Activated CD8-positive, alpha-beta T cell treated with anti-CD3 and anti-CD28 coated beads for 36 hours (primary cell): ENCODE measurements at regions of chr12 and their contacts with region 1.

Region 1: GRCh38 chr12:111396726-111397445 is 8.8 kb upstream of the SH2B3 start:
- DNase-seq: peak; percentile 89
- ATAC-seq: peak; percentile 75
- H3K4me3 Mint-ChIP-seq: peak overlapping the region; percentile 70
- H3K27ac Mint-ChIP-seq: peak overlapping the region; percentile 87
- H3K4me1 Mint-ChIP-seq: peaks cover 36% of the 10 kb centered on the region
- H3K27me3 Mint-ChIP-seq: no peaks in the 10 kb centered on the region
- CTCF ChIP-seq: peak; percentile 99

Region 2: DNA sequence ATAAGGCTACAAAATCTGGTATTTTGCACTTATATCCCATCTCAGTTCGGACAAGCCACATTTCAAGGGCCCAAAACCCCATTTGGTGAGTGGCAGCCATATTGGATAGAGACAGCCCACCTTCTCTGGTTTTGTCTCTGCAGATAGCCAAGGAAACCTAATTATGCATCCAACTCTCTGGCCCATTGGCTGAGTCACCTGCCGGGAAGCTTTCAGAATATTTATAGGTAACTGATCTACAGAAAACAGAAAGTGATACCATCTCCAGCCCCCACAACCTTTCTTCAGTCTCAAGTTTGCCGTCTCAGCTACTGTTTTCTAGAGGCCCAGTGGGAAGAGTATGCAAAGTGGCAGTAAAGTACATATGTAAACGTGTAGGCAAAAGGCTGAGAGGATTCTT is 620.5 kb before region 1 on chr12:
- CTCF ChIA-PET with region 1: no interaction called
- POLR2A ChIA-PET with region 1: no interaction called
- intact Hi-C with region 1: no loop called
- DNase-seq: peak; percentile 86
- ATAC-seq: peak; percentile 88
- H3K4me3 Mint-ChIP-seq: peak overlapping the region; percentile 35
- H3K27ac Mint-ChIP-seq: peak overlapping the region; percentile 96
- H3K4me1 Mint-ChIP-seq: peaks cover 61% of the 10 kb centered on the region
- H3K27me3 Mint-ChIP-seq: no peaks in the 10 kb centered on the region
- CTCF ChIP-seq: no peak

Region 3: GRCh38 chr12:111386885-111387284 is 10.0 kb before region 1 on chr12:
- CTCF ChIA-PET with region 1: interaction called, 14 read pairs
- POLR2A ChIA-PET with region 1: no interaction called
- intact Hi-C with region 1: no loop called
- DNase-seq: no peak
- ATAC-seq: no peak
- H3K4me3 Mint-ChIP-seq: no peak overlapping the region
- H3K27ac Mint-ChIP-seq: no peak overlapping the region
- H3K4me1 Mint-ChIP-seq: no peaks in the 10 kb centered on the region
- H3K27me3 Mint-ChIP-seq: no peaks in the 10 kb centered on the region
- CTCF ChIP-seq: no peak

Region 4: DNA sequence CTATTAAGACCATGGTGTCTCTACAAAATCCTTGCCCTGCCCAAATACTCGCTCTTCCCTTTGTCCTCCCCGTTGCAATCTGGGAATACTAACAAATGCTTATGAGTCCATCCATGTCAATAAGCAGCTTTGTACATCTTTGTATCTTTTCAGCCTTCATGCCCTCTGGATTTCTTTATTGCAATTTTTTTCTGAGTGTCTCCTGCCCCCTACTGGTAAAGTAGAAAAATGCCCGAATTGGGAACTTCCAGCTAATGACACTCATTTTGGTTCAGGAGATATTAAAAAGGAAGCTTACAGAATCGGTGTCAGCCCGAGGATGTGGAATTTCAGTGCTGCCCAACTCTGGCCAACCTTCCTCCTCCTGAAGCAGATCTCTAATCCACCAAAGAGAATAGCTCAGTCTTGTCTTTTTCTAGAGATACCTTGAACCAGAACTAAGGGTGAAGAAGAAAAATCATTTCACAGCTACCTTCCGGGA is 54.8 kb after region 1 on chr12:
- CTCF ChIA-PET with region 1: interaction called, 1,222 read pairs
- POLR2A ChIA-PET with region 1: interaction called, 28 read pairs
- intact Hi-C with region 1: loop called (anchors 1 kb)
- DNase-seq: no peak
- ATAC-seq: peak; percentile 53
- H3K4me3 Mint-ChIP-seq: no peak overlapping the region
- H3K27ac Mint-ChIP-seq: peak overlapping the region; percentile 21
- H3K4me1 Mint-ChIP-seq: peaks cover 40% of the 10 kb centered on the region
- H3K27me3 Mint-ChIP-seq: no peaks in the 10 kb centered on the region
- CTCF ChIP-seq: peak; percentile 92

Region 5: GRCh38 chr12:111482462-111482861 is 85.6 kb after region 1 on chr12:
- CTCF ChIA-PET with region 1: interaction called, 47 read pairs
- POLR2A ChIA-PET with region 1: interaction called, 3 read pairs
- intact Hi-C with region 1: no loop called
- DNase-seq: no peak
- ATAC-seq: no peak
- H3K4me3 Mint-ChIP-seq: no peak overlapping the region
- H3K27ac Mint-ChIP-seq: no peak overlapping the region
- H3K4me1 Mint-ChIP-seq: no peaks in the 10 kb centered on the region
- H3K27me3 Mint-ChIP-seq: no peaks in the 10 kb centered on the region
- CTCF ChIP-seq: no peak

Region 6: DNA sequence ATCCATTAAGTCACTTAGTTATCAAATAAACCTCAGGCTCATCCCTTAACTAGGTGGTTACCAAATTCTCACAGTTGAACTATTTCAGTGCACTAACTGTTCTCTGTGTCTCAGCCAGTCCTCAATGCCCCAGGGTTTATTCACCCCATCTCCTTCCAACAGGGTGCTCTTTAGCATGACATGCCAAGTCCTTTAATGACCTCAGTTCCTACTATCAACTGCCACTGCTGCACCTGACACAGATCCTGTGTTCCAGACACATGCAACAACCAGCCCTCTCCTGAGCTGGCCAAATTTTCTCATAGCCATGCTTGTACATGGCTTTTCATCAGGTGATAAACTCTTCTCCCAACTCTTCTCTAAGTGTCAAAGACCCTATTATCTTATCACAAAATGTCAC is 122.2 kb after region 1 on chr12:
- CTCF ChIA-PET with region 1: interaction called, 10 read pairs
- POLR2A ChIA-PET with region 1: no interaction called
- intact Hi-C with region 1: no loop called
- DNase-seq: no peak
- ATAC-seq: no peak
- H3K4me3 Mint-ChIP-seq: no peak overlapping the region
- H3K27ac Mint-ChIP-seq: no peak overlapping the region
- H3K4me1 Mint-ChIP-seq: no peaks in the 10 kb centered on the region
- H3K27me3 Mint-ChIP-seq: no peaks in the 10 kb centered on the region
- CTCF ChIP-seq: no peak